T-cell (primary cell): ENCODE measurements at regions of chr12 and their contacts with region 1.

Region 1: GRCh38 chr12:55797068-55797467 is 20.5 kb downstream of the SARNP start:
- DNase-seq: peak in 1 of 35 experiments; percentile 47
- ATAC-seq: no peak
- H3K4me3 ChIP-seq: no peak overlapping the region
- H3K4me3 Mint-ChIP-seq: no peak overlapping the region
- H3K27ac ChIP-seq: no peak overlapping the region
- H3K27ac Mint-ChIP-seq: no peak overlapping the region
- H3K4me1 ChIP-seq: no peaks in the 10 kb centered on the region
- H3K4me1 Mint-ChIP-seq: peaks cover 0 to 5% (median 3%) of the 10 kb centered on the region in 3 donors
- H3K27me3 ChIP-seq: no peaks in the 10 kb centered on the region
- H3K27me3 Mint-ChIP-seq: no peaks in the 10 kb centered on the region

Region 2: GRCh38 chr12:53854701-53855316 is 1942.3 kb before region 1 on chr12:
- CTCF ChIA-PET with region 1: interaction called in 1 of 2 experiments, 10 read pairs
- POLR2A ChIA-PET with region 1: no interaction called
- DNase-seq: no peak
- ATAC-seq: no peak
- H3K4me3 ChIP-seq: no peak overlapping the region
- H3K4me3 Mint-ChIP-seq: no peak overlapping the region
- H3K27ac ChIP-seq: no peak overlapping the region
- H3K27ac Mint-ChIP-seq: no peak overlapping the region
- H3K4me1 ChIP-seq: no peaks in the 10 kb centered on the region
- H3K4me1 Mint-ChIP-seq: no peaks in the 10 kb centered on the region
- H3K27me3 ChIP-seq: peaks cover 4 to 12% of the 10 kb centered on the region in 2 experiments
- H3K27me3 Mint-ChIP-seq: peaks cover 32 to 45% of the 10 kb centered on the region in 2 donors